Esophagus muscularis mucosa (tissue), 4 donors: ENCODE measurements at regions of chr1 and their contacts with region 1.

Region 1: GRCh38 chr1:27321813-27322577 is at the start of gene TMEM222:
- DNase-seq: peak; percentile 99
- H3K4me3 ChIP-seq: peak within 1 kb of the TSS; percentile 70 to 99 (median 79)
- H3K27ac ChIP-seq: peak within 1 kb of the TSS; percentile 76 to 94 (median 90)
- H3K4me1 ChIP-seq: peaks cover 31 to 53% (median 51%) of the 10 kb centered on the region in 4 donors
- H3K27me3 ChIP-seq: no peaks in the 10 kb centered on the region
- CTCF ChIP-seq: peak; percentile 16 to 42 (median 40)
- EP300 ChIP-seq: no peak
- POLR2A ChIP-seq: peak; percentile 12
- total RNA-seq, gene TMEM222: 23.3 to 35.3 (median 31.8) TPM

Region 2: DNA sequence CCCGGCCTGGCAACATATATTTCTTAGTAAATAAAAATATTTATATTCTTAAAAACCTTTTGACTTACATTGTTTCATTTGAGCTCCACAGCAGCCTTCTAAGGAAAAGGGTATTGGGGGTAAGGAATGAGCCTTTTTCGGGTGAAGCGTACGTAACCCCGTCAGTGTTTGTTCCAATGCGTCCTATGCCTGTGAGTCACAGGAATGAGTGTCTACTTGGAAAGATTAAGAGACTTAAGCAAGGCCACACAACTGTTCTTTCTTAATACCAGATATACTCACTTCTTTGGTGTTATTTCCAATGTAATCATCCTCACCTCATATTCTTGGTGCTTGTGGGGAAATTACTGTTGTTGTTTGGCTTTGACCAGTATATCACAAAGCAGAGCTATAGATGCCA is 64.8 kb before region 1 on chr1:
- intact Hi-C with region 1: no loop called
- DNase-seq: no peak
- H3K4me3 ChIP-seq: no peak overlapping the region
- H3K27ac ChIP-seq: no peak overlapping the region
- H3K4me1 ChIP-seq: peaks cover 0 to 3% (median 0%) of the 10 kb centered on the region in 4 donors
- H3K27me3 ChIP-seq: no peaks in the 10 kb centered on the region
- CTCF ChIP-seq: no peak
- EP300 ChIP-seq: no peak
- POLR2A ChIP-seq: no peak

Region 3: GRCh38 chr1:27616441-27616840 is 294.4 kb after region 1 on chr1:
- intact Hi-C with region 1: loop called (anchors 10 kb)
- DNase-seq: no peak
- H3K4me3 ChIP-seq: no peak overlapping the region
- H3K27ac ChIP-seq: no peak overlapping the region
- H3K4me1 ChIP-seq: peaks cover 5 to 13% (median 8%) of the 10 kb centered on the region in 4 donors
- H3K27me3 ChIP-seq: peaks cover 0 to 20% (median 0%) of the 10 kb centered on the region in 4 donors
- CTCF ChIP-seq: no peak
- EP300 ChIP-seq: no peak
- POLR2A ChIP-seq: no peak